AG04449 (cell line): ENCODE measurements at regions of chr19 and their contacts with region 1.

Region 1: GRCh38 chr19:46542428-46543230 is 47.0 kb upstream of the PNMA8B start:
- DNase-seq: peak; percentile 73
- H3K4me3 ChIP-seq: no peak overlapping the region
- CTCF ChIP-seq: peak; percentile 60

Region 2: DNA sequence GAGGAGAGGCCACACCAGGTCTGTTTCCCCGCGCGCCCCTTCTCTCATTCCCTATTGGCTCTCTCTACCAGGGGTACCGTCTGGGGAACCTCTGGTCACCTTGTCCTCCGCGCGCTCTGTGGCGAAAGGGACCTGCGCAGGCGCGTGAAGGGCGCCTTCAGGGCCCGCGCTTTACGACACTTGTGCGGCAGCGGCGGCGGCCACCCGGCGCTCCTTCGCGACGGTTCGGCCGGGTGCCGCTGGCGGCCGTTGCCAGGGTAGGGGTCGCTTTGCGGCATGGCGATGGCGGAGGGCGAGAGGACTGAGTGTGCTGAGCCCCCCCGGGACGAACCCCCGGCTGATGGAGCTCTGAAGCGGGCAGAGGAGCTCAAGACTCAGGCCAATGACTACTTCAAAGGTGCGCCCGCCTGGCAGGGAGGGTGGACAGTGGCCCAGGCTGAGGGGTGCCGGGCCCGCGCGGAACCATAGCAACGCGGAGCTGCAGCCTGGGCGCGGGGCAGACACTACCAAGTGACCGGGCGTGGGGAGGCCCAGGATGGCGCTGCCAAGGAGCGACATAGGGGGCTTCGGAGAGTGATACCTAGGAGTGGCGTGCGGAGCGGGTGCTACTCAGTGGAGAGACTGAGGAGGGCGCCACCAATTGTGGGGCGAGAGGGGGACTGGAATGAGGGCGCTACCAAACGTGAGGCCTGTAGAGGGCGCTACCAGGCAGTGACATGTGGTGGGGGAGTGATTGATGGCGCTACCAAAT is 195.6 kb before region 1 on chr19 and contains the start of gene PPP5C:
- CTCF ChIA-PET with region 1: no interaction called
- POLR2A ChIA-PET with region 1: no interaction called
- DNase-seq: peak; percentile 21
- H3K4me3 ChIP-seq: peak within 1 kb of the TSS; percentile 99
- CTCF ChIP-seq: peak; percentile 95

Region 3: DNA sequence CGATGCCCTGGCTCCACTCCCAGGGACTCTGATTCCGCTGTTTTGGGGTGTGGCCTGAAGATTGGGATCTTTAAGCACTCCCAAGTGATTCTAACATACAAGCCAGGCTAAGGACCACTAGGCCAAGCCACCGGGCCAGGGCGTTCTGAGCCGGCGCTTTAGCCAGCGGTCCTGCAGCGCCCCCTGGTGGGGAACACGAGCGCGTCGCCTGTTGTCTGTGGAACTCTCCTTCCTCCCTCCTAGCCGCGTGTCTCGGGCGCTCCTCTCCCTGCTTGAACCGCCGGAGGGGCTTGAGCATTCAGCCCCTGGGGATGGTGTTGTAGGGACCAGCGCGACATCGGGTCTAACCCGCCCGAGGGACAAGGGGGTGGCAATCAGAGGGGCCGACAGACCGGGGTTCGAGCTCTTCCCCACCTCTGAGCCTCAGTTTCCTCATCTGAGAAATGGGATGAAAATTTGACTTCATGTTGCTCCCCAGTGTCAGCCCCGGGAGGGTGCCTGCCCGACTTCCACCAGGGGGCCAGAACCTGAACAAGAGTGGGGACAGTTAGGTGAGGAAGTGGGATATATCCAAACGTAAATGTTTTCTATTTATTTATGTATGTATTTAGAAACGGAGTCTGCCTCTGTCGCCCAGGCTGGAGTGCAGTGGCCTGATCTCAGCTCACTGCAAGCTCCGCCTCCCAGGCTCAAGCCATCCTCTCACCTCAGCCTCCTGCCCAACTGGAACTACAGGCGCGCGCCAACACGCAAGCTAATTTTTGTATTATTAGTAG is 29.0 kb before region 1 on chr19:
- CTCF ChIA-PET with region 1: interaction called, 44 read pairs
- POLR2A ChIA-PET with region 1: no interaction called
- DNase-seq: no peak
- H3K4me3 ChIP-seq: no peak overlapping the region
- CTCF ChIP-seq: peak; percentile 76

Region 4: GRCh38 chr19:46564701-46565100 is 22.1 kb after region 1 on chr19:
- CTCF ChIA-PET with region 1: interaction called, 16 read pairs
- POLR2A ChIA-PET with region 1: no interaction called
- DNase-seq: no peak
- H3K4me3 ChIP-seq: no peak overlapping the region
- CTCF ChIP-seq: no peak

Region 5: DNA sequence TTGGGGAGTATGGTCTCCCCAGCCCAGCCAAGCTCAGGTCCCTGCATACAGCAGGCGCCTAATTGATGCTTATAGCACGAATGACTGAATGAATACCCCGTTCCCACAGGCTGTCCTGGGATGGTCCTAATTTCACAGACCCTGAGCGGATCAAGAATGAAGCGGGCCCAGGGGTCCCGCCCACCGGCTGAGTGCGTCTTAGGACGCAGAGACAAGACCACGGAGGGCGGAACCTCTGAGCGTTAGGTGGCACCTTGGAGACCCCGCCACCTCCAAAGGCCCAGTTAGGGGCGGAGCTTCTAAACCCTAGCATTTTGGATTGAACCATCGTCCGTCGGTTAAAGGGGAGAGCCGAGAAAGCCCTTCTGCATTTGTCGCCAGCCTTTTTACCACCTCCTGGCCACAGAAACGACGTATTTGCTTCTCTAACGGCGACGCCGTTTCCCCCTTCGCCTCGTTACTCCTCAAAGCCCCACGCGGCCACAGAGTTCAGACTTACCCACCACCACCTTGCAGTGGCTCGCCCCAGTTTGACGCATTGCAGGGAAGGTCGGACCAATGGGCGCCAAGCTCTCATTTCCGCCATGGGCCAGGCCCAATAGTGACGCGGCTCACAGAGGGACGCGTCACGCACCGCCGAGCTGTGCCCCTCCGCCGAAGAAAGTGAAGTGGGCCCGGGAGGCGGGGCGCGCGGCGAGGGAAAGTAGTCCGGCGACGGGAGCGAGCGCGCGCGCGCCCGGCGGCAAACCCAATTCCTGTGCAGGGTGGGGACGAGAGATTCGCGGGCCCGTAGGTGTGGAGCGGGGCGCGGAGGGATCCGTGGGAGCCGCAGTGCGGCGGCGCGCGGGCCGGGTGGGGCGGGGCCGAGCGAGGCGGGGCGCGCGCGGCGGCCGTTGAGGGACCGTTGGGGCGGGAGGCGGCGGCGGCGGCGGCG is 58.0 kb after region 1 on chr19:
- CTCF ChIA-PET with region 1: interaction called, 18 read pairs
- POLR2A ChIA-PET with region 1: no interaction called
- DNase-seq: peak; percentile 84
- H3K4me3 ChIP-seq: peak overlapping the region; percentile 89
- CTCF ChIP-seq: no peak

Region 6: GRCh38 chr19:46624958-46625661 is 82.5 kb after region 1 on chr19 and contains the start of gene PTGIR:
- CTCF ChIA-PET with region 1: no interaction called
- POLR2A ChIA-PET with region 1: no interaction called
- DNase-seq: no peak
- H3K4me3 ChIP-seq: peak within 1 kb of the TSS; percentile 50
- CTCF ChIP-seq: no peak